ENCODE measurements at regions of chr6 and their contacts with region 1.

Region 1: GRCh38 chr6:155314092-155314772 is at the start of gene TFB1M:
- DNase-seq: peak; percentile 84 to 98 (median 94)
- ATAC-seq: peak; percentile 96
- H3K4me3 ChIP-seq: peak within 1 kb of the TSS; percentile 86
- H3K4me3 Mint-ChIP-seq: peak within 1 kb of the TSS; percentile 80 to 98 (median 96)
- H3K27ac ChIP-seq: peak within 1 kb of the TSS; percentile 90
- H3K27ac Mint-ChIP-seq: peak within 1 kb of the TSS; percentile 84 to 97 (median 93)
- H3K4me1 ChIP-seq: peaks cover 3 to 5% of the 10 kb centered on the region in 2 donors
- H3K4me1 Mint-ChIP-seq: peaks cover 10 to 48% (median 41%) of the 10 kb centered on the region in 7 donors
- H3K27me3 ChIP-seq: no peaks in the 10 kb centered on the region
- H3K27me3 Mint-ChIP-seq: no peaks in the 10 kb centered on the region
- total RNA-seq, gene TFB1M: 20.5 to 45.4 (median 29.7) TPM

Region 2: GRCh38 chr6:154733012-154733625 is 581.1 kb before region 1 on chr6 and contains the start of gene SCAF8:
- CTCF ChIA-PET with region 1: no interaction called
- POLR2A ChIA-PET with region 1: interaction called, 4 read pairs
- intact Hi-C with region 1: loop called (anchors 1 kb)
- DNase-seq: peak; percentile 72 to 96 (median 90)
- ATAC-seq: peak; percentile 88
- H3K4me3 ChIP-seq: peak within 1 kb of the TSS; percentile 81
- H3K4me3 Mint-ChIP-seq: peak within 1 kb of the TSS; percentile 89 to 98 (median 92)
- H3K27ac ChIP-seq: peak within 1 kb of the TSS; percentile 93
- H3K27ac Mint-ChIP-seq: peak within 1 kb of the TSS; percentile 85 to 99 (median 93)
- H3K4me1 ChIP-seq: peaks cover 26 to 36% of the 10 kb centered on the region in 2 donors
- H3K4me1 Mint-ChIP-seq: peaks cover 20 to 49% (median 44%) of the 10 kb centered on the region in 7 donors
- H3K27me3 ChIP-seq: no peaks in the 10 kb centered on the region
- H3K27me3 Mint-ChIP-seq: no peaks in the 10 kb centered on the region
- total RNA-seq, gene SCAF8: 41.1 to 69.2 (median 54.9) TPM

Region 3: DNA sequence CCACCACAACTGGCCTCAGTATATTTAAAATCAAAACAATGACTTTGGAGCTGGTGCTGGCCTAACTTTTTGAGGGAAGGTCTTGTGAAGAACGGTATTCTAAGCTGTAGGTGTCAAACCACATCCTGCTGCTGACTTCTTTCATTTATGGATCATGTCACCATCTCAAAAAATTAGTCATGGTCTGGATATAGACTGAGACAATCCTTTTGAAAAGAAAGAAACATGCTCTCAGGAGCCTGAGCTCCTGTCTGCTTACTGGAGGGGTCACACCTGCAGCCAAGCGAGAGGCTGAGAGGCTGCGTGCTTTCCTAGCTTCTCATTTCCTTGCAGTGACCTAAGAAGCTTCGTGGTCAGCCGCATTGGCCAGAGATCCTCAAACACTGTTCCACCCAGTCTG is 263.9 kb before region 1 on chr6:
- CTCF ChIA-PET with region 1: no interaction called
- POLR2A ChIA-PET with region 1: no interaction called
- intact Hi-C with region 1: no loop called
- DNase-seq: peak in 2 of 9 donors; percentile 4 to 44
- ATAC-seq: peak; percentile 16
- H3K4me3 ChIP-seq: no peak overlapping the region
- H3K4me3 Mint-ChIP-seq: peak overlapping the region in 1 of 10 donors; percentile 57
- H3K27ac ChIP-seq: no peak overlapping the region
- H3K27ac Mint-ChIP-seq: peak overlapping the region in 1 of 9 donors; percentile 79
- H3K4me1 ChIP-seq: peaks cover 0 to 16% of the 10 kb centered on the region in 2 donors
- H3K4me1 Mint-ChIP-seq: peaks cover 2 to 27% (median 5%) of the 10 kb centered on the region in 7 donors
- H3K27me3 ChIP-seq: no peaks in the 10 kb centered on the region
- H3K27me3 Mint-ChIP-seq: peaks cover 0 to 11% (median 0%) of the 10 kb centered on the region in 5 donors

Region 4: DNA sequence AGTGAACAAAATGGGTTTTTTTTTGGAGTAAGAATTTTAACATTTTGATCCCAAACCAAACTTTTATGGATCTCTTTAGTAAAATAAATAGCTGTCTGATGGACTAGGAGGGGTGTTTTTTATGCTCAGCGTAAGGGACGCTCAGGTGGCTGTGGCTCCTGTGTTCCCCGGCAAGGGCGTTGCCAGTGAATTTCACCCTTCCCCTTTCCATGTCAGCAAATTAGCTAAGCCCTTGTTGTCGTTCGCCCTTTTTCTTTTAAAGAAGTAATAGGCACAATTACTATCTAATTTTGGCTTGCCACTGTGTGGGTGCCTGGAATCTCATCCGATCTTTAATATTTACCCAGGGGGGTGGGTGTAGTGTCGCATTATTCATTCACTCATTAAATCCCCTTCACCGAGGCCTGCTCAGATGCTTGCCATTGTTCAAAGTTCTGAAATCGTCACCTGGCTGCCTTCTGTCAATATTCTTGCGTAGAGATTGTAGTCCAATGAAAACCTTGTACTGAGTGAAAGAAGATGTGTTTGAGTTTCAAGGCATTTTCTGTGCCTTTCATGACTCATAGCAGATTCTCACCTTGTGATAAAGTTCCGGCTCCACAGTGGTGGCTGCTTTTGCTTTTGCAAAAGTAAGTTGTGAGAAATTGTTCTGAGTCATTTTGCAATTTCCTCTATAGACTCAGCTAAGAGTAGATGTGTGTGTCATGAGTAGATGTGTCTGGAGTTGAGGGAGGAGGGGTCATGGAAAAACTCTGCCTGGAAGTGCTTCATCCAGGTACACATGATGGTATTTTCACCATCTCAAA is 90.4 kb before region 1 on chr6:
- CTCF ChIA-PET with region 1: no interaction called
- POLR2A ChIA-PET with region 1: interaction called, 5 read pairs
- intact Hi-C with region 1: loop called in 1 of 2 experiments (anchors 1 kb)
- DNase-seq: peak in 1 of 9 donors; percentile 49
- ATAC-seq: peak; percentile 78
- H3K4me3 ChIP-seq: no peak overlapping the region
- H3K4me3 Mint-ChIP-seq: peak overlapping the region in 1 of 10 donors; percentile 42
- H3K27ac ChIP-seq: no peak overlapping the region
- H3K27ac Mint-ChIP-seq: peak overlapping the region in 2 of 9 donors; percentile 43 to 64
- H3K4me1 ChIP-seq: peaks cover 0 to 5% of the 10 kb centered on the region in 2 donors
- H3K4me1 Mint-ChIP-seq: peaks cover 0 to 17% (median 7%) of the 10 kb centered on the region in 7 donors
- H3K27me3 ChIP-seq: no peaks in the 10 kb centered on the region
- H3K27me3 Mint-ChIP-seq: peaks cover 0 to 10% (median 4%) of the 10 kb centered on the region in 5 donors

Region 5: GRCh38 chr6:155327326-155328073 is 13.3 kb after region 1 on chr6:
- CTCF ChIA-PET with region 1: interaction called, 12 read pairs
- POLR2A ChIA-PET with region 1: interaction called, 5 read pairs
- intact Hi-C with region 1: no loop called
- DNase-seq: peak; percentile 34 to 76 (median 66)
- ATAC-seq: peak; percentile 80
- H3K4me3 ChIP-seq: no peak overlapping the region
- H3K4me3 Mint-ChIP-seq: peak overlapping the region in 6 of 10 donors; percentile 0 to 40 (median 16)
- H3K27ac ChIP-seq: no peak overlapping the region
- H3K27ac Mint-ChIP-seq: peak overlapping the region; percentile 1 to 68 (median 15)
- H3K4me1 ChIP-seq: peaks cover 0 to 16% of the 10 kb centered on the region in 2 donors
- H3K4me1 Mint-ChIP-seq: peaks cover 3 to 21% (median 19%) of the 10 kb centered on the region in 7 donors
- H3K27me3 ChIP-seq: no peaks in the 10 kb centered on the region
- H3K27me3 Mint-ChIP-seq: no peaks in the 10 kb centered on the region

Region 6: GRCh38 chr6:155373276-155373675 is 59.0 kb after region 1 on chr6:
- CTCF ChIA-PET with region 1: no interaction called
- POLR2A ChIA-PET with region 1: no interaction called
- intact Hi-C with region 1: no loop called
- DNase-seq: no peak
- ATAC-seq: no peak
- H3K4me3 ChIP-seq: no peak overlapping the region
- H3K4me3 Mint-ChIP-seq: no peak overlapping the region
- H3K27ac ChIP-seq: no peak overlapping the region
- H3K27ac Mint-ChIP-seq: no peak overlapping the region
- H3K4me1 ChIP-seq: no peaks in the 10 kb centered on the region
- H3K4me1 Mint-ChIP-seq: no peaks in the 10 kb centered on the region
- H3K27me3 ChIP-seq: no peaks in the 10 kb centered on the region
- H3K27me3 Mint-ChIP-seq: peaks cover 0 to 7% (median 2%) of the 10 kb centered on the region in 5 donors

Region 7: DNA sequence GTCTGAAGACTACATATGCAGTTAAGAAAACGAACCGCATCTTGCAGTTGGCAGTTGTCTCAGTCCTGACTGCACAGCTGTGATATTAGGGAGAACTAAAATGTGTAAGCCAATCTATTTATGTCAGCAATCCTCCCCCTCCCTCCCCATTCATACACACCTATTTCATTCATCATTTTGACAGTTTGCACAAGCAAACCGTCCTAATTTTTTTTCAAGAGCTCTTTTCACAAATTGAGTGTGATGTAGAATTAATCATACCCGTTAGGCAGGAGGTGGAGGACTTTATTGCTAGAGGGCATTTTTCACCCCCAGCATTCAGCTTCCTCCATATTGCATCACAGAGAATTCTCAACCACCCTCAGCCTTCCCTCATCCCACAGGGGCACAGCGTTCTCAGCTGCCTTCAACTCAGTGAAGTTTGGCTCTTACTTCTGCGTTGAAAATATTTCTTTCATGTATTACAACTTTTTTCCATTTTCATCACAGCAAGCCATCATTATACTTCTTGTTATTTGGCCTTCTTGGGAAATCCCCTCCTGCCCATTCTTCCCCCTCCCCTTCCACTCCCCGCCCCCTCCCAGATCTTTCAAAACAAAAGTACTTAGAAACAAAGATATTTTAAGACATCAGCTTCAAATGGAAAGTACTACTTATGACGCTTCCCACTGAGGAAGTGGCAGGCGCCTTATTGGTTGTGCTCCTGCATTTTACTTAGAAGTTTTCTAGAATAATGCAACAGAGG is 104.0 kb after region 1 on chr6:
- CTCF ChIA-PET with region 1: interaction called, 3 read pairs
- POLR2A ChIA-PET with region 1: interaction called, 5 read pairs
- intact Hi-C with region 1: loop called (anchors 1 kb)
- DNase-seq: peak; percentile 9 to 87 (median 68)
- ATAC-seq: peak; percentile 89
- H3K4me3 ChIP-seq: peak overlapping the region; percentile 44
- H3K4me3 Mint-ChIP-seq: peak overlapping the region; percentile 77 to 89 (median 84)
- H3K27ac ChIP-seq: peak overlapping the region; percentile 84
- H3K27ac Mint-ChIP-seq: peak overlapping the region; percentile 93 to 99 (median 97)
- H3K4me1 ChIP-seq: peaks cover 6 to 15% of the 10 kb centered on the region in 2 donors
- H3K4me1 Mint-ChIP-seq: peaks cover 22 to 50% (median 38%) of the 10 kb centered on the region in 7 donors
- H3K27me3 ChIP-seq: no peaks in the 10 kb centered on the region
- H3K27me3 Mint-ChIP-seq: no peaks in the 10 kb centered on the region

Measured in naive thymus-derived CD4-positive, alpha-beta T cell (primary cell).